ENCODE measurements at regions of chr12 and their contacts with region 1.

Region 1: GRCh38 chr12:6627616-6628015 is 8.1 kb downstream of the LPAR5 start:
- DNase-seq: no peak
- ATAC-seq: peak; percentile 81
- H3K4me3 ChIP-seq: peak overlapping the region; percentile 24 to 46; a peak in 3 of 4 replicates
- H3K27ac ChIP-seq: no peak overlapping the region
- H3K4me1 ChIP-seq: no peaks in the 10 kb centered on the region
- H3K27me3 ChIP-seq: no peaks in the 10 kb centered on the region
- CTCF ChIP-seq: no peak

Region 2: DNA sequence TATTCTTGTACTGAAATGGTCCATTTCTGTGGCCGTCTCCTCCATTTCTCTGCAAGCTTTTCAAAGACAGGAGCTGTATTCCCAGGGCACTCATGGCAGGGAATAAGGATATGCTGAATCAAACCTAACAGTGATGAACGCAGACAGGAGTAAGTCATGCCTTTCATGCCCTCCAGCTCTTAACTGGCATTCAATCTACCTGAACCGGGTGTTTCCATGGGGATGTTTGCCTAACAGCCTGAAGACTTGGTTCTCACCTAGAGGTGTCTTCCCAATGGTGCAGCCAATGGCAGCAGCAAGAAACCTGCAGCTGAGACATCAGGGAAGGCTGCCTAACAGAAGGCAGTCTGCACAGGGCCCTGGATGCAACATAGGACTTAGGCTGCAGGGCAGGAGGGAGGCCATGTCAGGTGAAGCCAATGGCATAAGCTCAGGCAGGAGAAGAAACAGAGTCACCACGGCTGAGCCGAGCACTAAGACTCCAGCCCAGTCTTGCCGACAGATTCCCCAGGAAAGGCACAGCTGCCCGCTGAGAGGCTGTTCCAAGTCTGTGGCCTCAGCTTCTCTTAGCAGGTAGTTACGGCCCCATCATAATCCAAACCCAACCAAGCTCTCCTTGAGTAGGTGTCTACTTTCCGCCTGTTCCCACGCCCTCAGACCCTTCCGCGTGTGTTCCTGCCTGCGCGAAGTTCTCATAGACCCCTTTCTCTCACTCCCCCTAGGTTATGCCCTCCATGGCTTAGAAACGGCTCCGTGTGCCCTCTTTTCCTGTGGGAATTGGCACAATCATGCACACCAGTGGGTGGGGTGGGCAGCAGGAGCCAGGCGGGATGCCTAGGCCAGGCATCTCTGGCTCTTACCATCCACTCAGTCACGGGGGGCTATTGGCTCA is 547.2 kb before region 1 on chr12:
- CTCF ChIA-PET with region 1: no interaction called
- POLR2A ChIA-PET with region 1: interaction called, 15 read pairs
- in situ Hi-C with region 1: no loop called
- intact Hi-C with region 1: no loop called
- DNase-seq: no peak
- ATAC-seq: no peak
- H3K4me3 ChIP-seq: no peak overlapping the region
- H3K27ac ChIP-seq: no peak overlapping the region
- H3K4me1 ChIP-seq: no peaks in the 10 kb centered on the region
- H3K27me3 ChIP-seq: no peaks in the 10 kb centered on the region
- CTCF ChIP-seq: no peak

Measured in Panc1 (cell line).